PC-9 (cell line): ENCODE measurements at regions of chr10 and their contacts with region 1.

Region 1: GRCh38 chr10:17454161-17455014 is at the start of gene ST8SIA6:
- DNase-seq: peak in 1 of 2 experiments; percentile 52
- H3K4me3 ChIP-seq: peak within 1 kb of the TSS; percentile 57
- H3K27ac ChIP-seq: no peak within 1 kb of the TSS
- H3K4me1 ChIP-seq: no peaks in the 10 kb centered on the region
- H3K27me3 ChIP-seq: no peaks in the 10 kb centered on the region
- CTCF ChIP-seq: no peak
- total RNA-seq, gene ST8SIA6: 0.60 and 2.1 TPM in 2 replicates

Region 2: GRCh38 chr10:17316488-17317170 is 137.8 kb before region 1 on chr10:
- CTCF ChIA-PET with region 1: no interaction called
- POLR2A ChIA-PET with region 1: no interaction called
- intact Hi-C with region 1: no loop called
- DNase-seq: no peak
- H3K4me3 ChIP-seq: no peak overlapping the region
- H3K27ac ChIP-seq: no peak overlapping the region
- H3K4me1 ChIP-seq: no peaks in the 10 kb centered on the region
- H3K27me3 ChIP-seq: no peaks in the 10 kb centered on the region
- CTCF ChIP-seq: no peak

Region 3: DNA sequence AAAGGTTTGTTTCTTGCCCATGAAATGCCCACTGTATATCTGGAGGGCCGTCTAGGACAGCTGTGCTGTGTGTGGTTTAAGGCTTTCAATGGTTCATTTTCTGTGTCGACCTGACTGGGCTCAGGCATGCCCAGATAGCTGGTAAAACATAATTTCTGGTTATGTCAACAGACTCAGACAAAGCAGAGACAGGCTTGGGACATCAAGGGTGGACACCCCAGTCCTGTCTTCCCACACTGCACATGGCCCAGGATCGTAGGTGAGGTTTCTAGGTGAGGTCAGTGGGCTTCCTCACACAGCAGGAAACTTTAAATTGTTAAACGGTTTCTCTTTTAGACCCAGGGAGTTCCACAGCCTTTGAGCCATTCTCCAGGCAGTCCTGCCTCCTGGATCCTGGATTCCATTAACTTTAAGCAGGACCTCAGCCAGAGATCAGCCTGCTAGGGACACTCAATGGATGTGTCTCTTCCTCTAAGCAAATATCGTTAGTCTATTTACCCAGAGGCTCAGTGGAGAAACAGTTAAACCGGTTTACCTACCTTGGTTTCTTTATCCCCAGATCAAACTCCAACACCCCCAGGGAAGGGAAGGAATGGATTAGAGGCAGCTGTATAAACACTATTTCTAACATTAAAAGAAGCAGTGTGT is 66.4 kb before region 1 on chr10:
- CTCF ChIA-PET with region 1: no interaction called
- POLR2A ChIA-PET with region 1: no interaction called
- intact Hi-C with region 1: no loop called
- DNase-seq: peak; percentile 48 to 88
- H3K4me3 ChIP-seq: peak overlapping the region; percentile 23; the same call in 1 of the 2 replicates
- H3K27ac ChIP-seq: peak overlapping the region; percentile 56
- H3K4me1 ChIP-seq: peaks cover 23% of the 10 kb centered on the region
- H3K27me3 ChIP-seq: no peaks in the 10 kb centered on the region
- CTCF ChIP-seq: no peak

Region 4: DNA sequence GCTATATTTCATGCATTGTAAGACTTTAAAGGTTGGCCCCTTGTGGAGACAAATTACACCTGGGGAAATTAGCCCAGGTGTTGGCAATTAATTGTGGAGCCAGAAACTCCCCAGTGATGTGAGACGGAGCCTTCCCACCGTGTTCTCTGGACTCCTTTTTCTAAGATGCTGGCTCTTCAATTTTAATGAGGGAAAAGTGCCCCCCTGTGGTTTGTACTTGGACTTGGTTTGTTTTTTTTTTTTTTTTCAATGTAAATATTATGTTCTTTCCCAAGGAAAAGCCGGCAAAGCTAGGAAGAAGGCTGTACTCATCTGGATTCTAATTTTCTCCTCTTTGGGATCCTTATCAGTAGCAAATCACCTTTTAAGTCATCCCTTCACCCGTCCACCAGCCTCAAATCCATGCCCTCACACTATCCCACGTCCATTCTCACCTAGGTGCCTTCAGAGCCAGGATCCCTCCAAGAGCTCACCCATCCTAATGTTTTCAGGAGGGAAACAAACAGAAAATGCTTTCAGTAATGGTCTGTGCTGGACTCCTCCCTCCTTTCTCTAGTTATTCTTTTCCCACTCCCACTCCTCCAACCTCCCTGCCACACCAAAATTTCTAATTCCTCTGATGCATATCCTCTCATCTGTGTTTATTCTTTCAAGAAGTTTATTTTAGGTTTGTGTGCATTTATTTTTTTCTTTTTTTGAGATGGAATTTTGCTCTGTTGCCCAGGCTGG is 20.4 kb after region 1 on chr10:
- CTCF ChIA-PET with region 1: interaction called, 16 read pairs
- POLR2A ChIA-PET with region 1: no interaction called
- intact Hi-C with region 1: no loop called
- DNase-seq: no peak
- H3K4me3 ChIP-seq: no peak overlapping the region
- H3K27ac ChIP-seq: no peak overlapping the region
- H3K4me1 ChIP-seq: no peaks in the 10 kb centered on the region
- H3K27me3 ChIP-seq: no peaks in the 10 kb centered on the region
- CTCF ChIP-seq: no peak

Region 5: DNA sequence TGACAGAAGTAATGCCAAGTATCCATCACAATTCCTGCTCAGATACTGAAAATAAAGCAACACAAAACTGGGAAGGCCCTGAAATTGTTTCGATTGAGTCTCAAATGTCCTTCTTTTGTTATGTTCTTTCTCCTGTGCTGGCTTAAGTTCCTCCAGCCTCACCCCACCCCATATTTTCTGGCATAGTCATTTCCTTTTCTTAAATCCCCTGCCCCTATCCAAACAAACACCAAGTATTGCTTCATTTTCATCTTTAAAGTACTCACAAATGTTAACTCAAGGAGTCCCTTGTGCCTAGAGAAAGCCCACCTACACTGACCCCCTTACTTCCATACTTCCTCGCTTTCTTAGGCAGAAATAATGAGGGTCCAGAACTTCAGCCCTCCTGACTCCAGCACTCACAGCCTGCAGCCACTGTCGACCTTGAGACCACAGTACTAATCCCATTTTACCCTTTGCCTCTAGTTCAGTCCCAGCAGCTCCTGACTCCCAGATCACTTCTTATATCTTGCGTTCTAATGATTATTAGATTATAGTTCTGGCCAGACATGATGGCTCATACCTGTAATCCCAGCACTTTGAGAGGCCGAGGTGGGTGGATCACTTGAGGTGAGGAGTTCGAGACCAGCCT is 73.2 kb after region 1 on chr10:
- CTCF ChIA-PET with region 1: no interaction called
- POLR2A ChIA-PET with region 1: no interaction called
- intact Hi-C with region 1: loop called (anchors 5 kb)
- DNase-seq: peak; percentile 55 to 75
- H3K4me3 ChIP-seq: no peak overlapping the region
- H3K27ac ChIP-seq: peak overlapping the region; percentile 92
- H3K4me1 ChIP-seq: peaks cover 17% of the 10 kb centered on the region
- H3K27me3 ChIP-seq: no peaks in the 10 kb centered on the region
- CTCF ChIP-seq: no peak

Region 6: DNA sequence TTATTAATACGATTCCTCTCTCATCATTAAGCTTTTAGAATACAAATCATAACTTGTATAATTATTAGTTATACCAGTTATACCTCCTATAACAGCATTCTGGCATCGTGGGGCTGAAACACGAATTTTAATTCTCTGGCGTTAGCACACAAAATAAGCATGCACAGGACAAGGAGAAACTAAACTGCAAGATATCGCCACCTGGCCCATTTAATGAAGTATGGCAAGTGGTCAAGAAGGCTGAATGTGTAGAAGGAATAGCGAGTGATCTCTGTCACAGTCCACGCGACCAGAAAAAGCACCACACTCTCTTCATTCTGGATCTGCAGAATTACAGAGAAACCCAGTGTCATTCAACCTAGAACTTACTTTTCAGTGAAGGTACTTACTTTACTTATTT is 144.7 kb after region 1 on chr10:
- CTCF ChIA-PET with region 1: no interaction called
- POLR2A ChIA-PET with region 1: no interaction called
- intact Hi-C with region 1: loop called (anchors 5 kb)
- DNase-seq: peak in 1 of 2 experiments; percentile 10
- H3K4me3 ChIP-seq: no peak overlapping the region
- H3K27ac ChIP-seq: no peak overlapping the region
- H3K4me1 ChIP-seq: no peaks in the 10 kb centered on the region
- H3K27me3 ChIP-seq: no peaks in the 10 kb centered on the region
- CTCF ChIP-seq: 0 out of 2 replicates have a peak, but pooled peaks have one; percentile 32